ENCODE measurements at regions of chr20 and their contacts with region 1.

Region 1: GRCh38 chr20:58550275-58551060 is 35.3 kb upstream of the APCDD1L start:
- DNase-seq: peak; percentile 85
- H3K4me3 ChIP-seq: no peak overlapping the region
- CTCF ChIP-seq: no peak

Region 2: DNA sequence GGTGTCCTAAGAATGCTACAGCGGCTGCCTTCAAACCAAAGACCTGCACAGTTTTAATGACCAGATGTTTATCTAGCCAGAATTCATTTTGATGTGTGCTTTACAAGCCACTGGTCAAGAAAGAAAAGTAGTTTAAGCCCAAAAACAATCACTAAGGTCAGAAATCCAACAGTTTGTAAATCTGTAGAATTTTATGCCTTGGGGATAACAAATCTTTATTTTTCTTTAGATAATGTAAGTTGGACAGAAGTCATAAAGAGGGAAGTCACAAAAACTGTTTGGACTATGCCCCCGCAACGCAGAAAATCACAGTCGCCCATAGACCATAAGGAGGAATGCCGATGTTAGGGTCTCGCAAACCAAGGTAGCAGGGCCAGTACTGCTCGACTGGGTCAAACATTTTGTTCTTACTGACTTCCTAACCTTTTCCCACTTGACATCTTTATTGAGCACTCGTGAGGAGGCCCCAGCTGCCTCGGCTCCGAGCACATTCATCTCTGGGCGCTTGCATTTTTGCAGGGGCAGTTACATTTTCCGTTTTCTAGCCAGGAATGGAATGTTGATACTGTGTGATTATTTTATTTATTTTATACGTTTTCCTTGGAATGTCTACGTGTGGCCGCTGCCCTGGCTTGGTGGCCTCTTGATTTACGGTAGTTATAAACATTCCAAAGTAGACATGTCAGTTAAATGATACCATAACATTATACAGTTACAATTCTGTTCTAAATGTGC is 21.4 kb after region 1 on chr20:
- CTCF ChIA-PET with region 1: interaction called, 3 read pairs
- POLR2A ChIA-PET with region 1: interaction called, 11 read pairs
- DNase-seq: peak; percentile 69
- H3K4me3 ChIP-seq: no peak overlapping the region
- CTCF ChIP-seq: no peak

Measured in AG04449 (cell line).